GM10248 (cell line): ENCODE measurements at regions of chr1 and their contacts with region 1.

Region 1: DNA sequence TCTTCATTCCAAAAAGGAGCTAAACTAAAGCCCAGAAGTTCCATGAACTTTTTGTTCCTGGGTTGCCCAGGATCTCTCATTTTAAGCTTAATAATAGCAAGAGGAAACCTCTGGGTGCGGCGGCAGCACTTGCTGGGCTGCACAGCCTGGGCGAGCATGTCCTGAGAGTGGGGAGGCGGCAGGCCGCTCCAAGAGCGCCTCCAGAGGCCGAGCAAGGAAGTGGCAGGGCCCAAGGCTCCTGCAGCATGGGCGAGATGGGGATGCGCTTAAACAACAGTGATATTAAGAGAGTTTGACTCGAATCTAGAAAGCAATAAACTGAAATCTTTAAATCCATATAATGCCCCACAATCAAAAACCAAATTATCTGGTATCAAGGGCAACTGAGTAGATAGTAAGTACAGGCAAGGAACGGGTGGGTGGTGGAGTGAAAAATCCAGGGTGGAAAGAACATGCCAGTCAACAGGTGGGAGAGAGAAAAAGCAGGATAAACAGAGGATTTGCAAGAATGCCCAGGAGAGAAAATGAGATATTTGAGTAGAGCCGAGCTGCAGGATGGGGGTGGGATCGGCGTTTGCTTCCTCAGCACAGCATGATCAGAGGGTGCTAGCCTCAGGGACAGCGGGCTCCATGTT is 14.1 kb upstream of the TNR start:
- DNase-seq: peak; percentile 69
- CTCF ChIP-seq: peak; percentile 77

Region 2: GRCh38 chr1:175701590-175701989 is 55.9 kb before region 1 on chr1:
- CTCF ChIA-PET with region 1: no interaction called
- POLR2A ChIA-PET with region 1: interaction called, 12 read pairs
- DNase-seq: no peak
- CTCF ChIP-seq: no peak

Region 3: GRCh38 chr1:175714350-175714749 is 43.1 kb before region 1 on chr1:
- CTCF ChIA-PET with region 1: no interaction called
- POLR2A ChIA-PET with region 1: no interaction called
- DNase-seq: no peak
- CTCF ChIP-seq: no peak

Region 4: DNA sequence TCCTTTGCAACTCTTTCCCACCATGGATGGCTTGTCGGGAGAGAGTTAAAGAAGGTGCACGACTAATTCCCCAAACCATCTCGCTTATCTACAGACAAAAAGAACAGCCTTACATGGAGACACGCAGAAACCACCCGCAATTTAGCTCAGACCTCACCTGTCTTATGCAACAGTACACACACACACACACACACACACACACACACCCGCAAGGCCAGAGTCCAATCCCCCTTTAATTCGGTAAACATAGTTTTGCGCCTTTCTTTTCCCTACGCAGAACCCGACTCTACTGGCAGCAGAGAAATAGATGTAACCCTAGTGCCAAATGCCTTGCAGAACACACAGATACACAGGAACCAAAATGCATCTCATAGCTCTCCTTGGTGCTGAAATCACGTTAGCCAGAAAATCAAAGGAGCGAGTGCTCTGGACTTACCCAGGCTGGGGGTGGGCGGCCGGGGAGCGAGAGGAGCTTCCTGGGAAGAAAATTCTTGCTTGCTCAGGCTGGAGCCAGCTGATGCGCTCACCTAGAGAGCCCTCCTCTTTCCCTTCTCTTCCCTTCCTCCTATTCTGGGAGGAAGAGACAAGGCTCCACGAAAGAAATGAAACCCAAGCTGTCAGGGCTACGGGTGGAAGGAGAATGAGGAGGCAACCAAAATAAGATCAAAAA is 14.6 kb before region 1 on chr1:
- CTCF ChIA-PET with region 1: interaction called, 46 read pairs
- POLR2A ChIA-PET with region 1: no interaction called
- DNase-seq: no peak
- CTCF ChIP-seq: no peak

Region 5: GRCh38 chr1:175768610-175769009 is 11.1 kb after region 1 on chr1:
- CTCF ChIA-PET with region 1: interaction called, 18 read pairs
- POLR2A ChIA-PET with region 1: no interaction called
- DNase-seq: no peak
- CTCF ChIP-seq: no peak